B cell (primary cell): ENCODE measurements at regions of chr14 and their contacts with region 1.

Region 1: GRCh38 chr14:101849125-101849524 is 87.6 kb downstream of the PPP2R5C start:
- DNase-seq: peak; percentile 71
- ATAC-seq: peak; percentile 62
- H3K4me3 ChIP-seq: no peak overlapping the region
- H3K4me3 Mint-ChIP-seq: peak overlapping the region; percentile 80
- H3K27ac ChIP-seq: peak overlapping the region in 1 of 2 donors; percentile 12
- H3K27ac Mint-ChIP-seq: peak overlapping the region; percentile 11
- H3K4me1 ChIP-seq: peaks cover 68 to 72% of the 10 kb centered on the region in 2 donors
- H3K4me1 Mint-ChIP-seq: peaks cover 85% of the 10 kb centered on the region
- H3K27me3 ChIP-seq: no peaks in the 10 kb centered on the region
- H3K27me3 Mint-ChIP-seq: no peaks in the 10 kb centered on the region
- CTCF ChIP-seq: no peak

Region 2: DNA sequence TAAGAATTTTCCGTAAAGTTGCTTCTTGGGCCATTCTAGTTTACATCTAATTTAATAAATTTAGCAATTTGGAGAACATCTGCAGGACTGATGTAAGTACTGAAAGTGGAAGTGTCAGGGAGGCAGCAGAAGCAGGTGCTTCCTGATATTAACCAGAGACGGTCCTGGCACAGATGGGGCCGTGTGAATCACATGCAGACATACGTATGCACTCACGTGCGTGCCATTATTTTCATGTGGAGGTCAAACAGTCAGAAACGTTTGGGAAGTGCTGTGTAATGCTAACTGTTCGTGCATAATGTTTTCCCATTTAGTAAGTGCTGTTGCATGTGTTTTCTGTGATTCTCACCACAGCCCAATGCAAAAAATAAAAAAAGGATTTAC is 27.4 kb after region 1 on chr14:
- CTCF ChIA-PET with region 1: interaction called, 15 read pairs
- POLR2A ChIA-PET with region 1: interaction called, 8 read pairs
- intact Hi-C with region 1: loop called (anchors 1 kb)
- DNase-seq: peak; percentile 96
- ATAC-seq: peak; percentile 89
- H3K4me3 ChIP-seq: peak overlapping the region in 4 of 5 experiments; percentile 8 to 57 (median 29)
- H3K4me3 Mint-ChIP-seq: peak overlapping the region; percentile 71
- H3K27ac ChIP-seq: peak overlapping the region; percentile 94 to 96
- H3K27ac Mint-ChIP-seq: peak overlapping the region; percentile 72
- H3K4me1 ChIP-seq: peaks cover 52 to 58% of the 10 kb centered on the region in 2 donors
- H3K4me1 Mint-ChIP-seq: peaks cover 79% of the 10 kb centered on the region
- H3K27me3 ChIP-seq: no peaks in the 10 kb centered on the region
- H3K27me3 Mint-ChIP-seq: no peaks in the 10 kb centered on the region
- CTCF ChIP-seq: no peak

Region 3: GRCh38 chr14:101932673-101933072 is 83.5 kb after region 1 on chr14:
- CTCF ChIA-PET with region 1: no interaction called
- POLR2A ChIA-PET with region 1: no interaction called
- intact Hi-C with region 1: no loop called
- DNase-seq: no peak
- ATAC-seq: no peak
- H3K4me3 ChIP-seq: no peak overlapping the region
- H3K4me3 Mint-ChIP-seq: no peak overlapping the region
- H3K27ac ChIP-seq: no peak overlapping the region
- H3K27ac Mint-ChIP-seq: no peak overlapping the region
- H3K4me1 ChIP-seq: no peaks in the 10 kb centered on the region
- H3K4me1 Mint-ChIP-seq: no peaks in the 10 kb centered on the region
- H3K27me3 ChIP-seq: no peaks in the 10 kb centered on the region
- H3K27me3 Mint-ChIP-seq: no peaks in the 10 kb centered on the region
- CTCF ChIP-seq: no peak